Psoas muscle (tissue), 8 donors: ENCODE measurements at regions of chr17 and their contacts with region 1.

Region 1: DNA sequence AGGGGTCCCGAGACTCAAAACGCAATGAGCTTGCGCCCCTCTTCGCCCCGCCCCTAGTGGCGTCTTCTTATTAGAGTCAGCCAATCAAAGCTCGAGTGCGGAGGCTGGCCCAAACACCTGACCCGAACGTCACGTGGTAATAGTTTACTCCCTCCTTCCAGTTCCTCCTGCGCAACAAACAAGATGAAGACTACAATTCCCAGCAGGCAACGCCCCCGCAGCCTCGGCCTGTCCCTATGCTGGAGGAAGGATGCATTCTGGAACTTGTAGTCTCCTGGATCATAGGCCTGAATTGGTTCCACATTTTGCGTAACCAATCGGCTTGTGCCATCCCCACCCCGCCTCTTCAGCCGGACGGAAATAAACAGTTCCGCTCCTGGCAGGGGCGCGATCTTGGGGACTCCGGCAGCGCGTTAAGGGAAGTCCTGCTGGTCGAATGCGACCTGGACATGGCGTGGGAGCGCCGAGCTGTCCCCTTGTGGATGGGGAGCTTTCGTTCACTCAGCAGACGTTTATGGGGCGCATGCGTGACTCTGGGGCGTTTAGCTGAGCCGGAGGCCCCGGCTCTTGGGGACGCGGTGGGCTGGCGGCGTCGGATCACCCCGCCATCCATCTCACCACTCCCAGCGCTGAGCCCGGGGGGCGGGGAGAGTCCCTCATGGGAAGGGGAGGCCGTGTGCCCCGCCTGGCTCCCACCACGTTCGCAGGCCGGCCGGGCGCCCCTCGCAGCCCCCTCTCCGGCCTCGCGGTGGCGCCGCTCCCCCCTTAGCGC is at the start of gene WBP2:
- DNase-seq: peak; percentile 98 to 99
- ATAC-seq: peak; percentile 82 to 87 (median 84)
- H3K4me3 ChIP-seq: peak within 1 kb of the TSS; percentile 86
- H3K27ac ChIP-seq: peak within 1 kb of the TSS; percentile 98
- H3K4me1 ChIP-seq: peaks cover 42% of the 10 kb centered on the region
- H3K27me3 ChIP-seq: no peaks in the 10 kb centered on the region
- CTCF ChIP-seq: peak; percentile 39
- total RNA-seq, gene WBP2: 109 to 278 (median 164) TPM

Region 2: GRCh38 chr17:75808905-75809715 is 46.4 kb before region 1 on chr17:
- intact Hi-C with region 1: no loop called
- DNase-seq: peak; percentile 69 to 70
- ATAC-seq: peak; percentile 85 to 96 (median 90)
- H3K4me3 ChIP-seq: peak overlapping the region; percentile 25
- H3K27ac ChIP-seq: peak overlapping the region; percentile 78
- H3K4me1 ChIP-seq: peaks cover 24% of the 10 kb centered on the region
- H3K27me3 ChIP-seq: no peaks in the 10 kb centered on the region
- CTCF ChIP-seq: no peak

Region 3: DNA sequence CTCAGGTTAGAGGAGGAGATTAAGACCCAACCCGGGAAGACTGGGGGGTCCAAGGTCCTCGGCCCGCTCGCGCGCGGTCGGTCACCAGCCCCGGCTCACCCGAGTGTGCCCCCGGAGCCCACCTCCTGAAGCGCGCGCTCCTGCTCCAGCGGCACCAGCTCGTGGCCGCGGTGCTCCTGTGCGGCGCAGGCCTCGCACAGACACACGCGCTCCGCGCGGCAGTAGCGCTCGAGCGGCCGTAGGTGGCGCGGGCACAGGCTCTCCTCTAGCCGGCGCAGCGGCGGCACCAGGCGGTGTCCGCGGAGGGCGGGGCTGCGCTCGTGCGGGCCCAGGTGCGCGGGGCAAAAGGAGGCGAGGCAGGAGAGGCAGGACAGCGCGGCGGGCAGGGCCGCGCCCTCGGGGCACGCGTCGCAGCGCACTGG is 22.3 kb after region 1 on chr17:
- intact Hi-C with region 1: loop called in 1 of 2 experiments (anchors 2 kb)
- DNase-seq: peak; percentile 76 to 87
- ATAC-seq: peak; percentile 67 to 77 (median 72)
- H3K4me3 ChIP-seq: peak overlapping the region; percentile 77
- H3K27ac ChIP-seq: peak overlapping the region; percentile 90
- H3K4me1 ChIP-seq: peaks cover 34% of the 10 kb centered on the region
- H3K27me3 ChIP-seq: no peaks in the 10 kb centered on the region
- CTCF ChIP-seq: peak; percentile 40

Region 4: GRCh38 chr17:75896415-75897159 is 41.1 kb after region 1 on chr17 and contains the start of gene TRIM65:
- intact Hi-C with region 1: loop called (anchors 2 to 5 kb)
- DNase-seq: peak; percentile 91 to 95
- ATAC-seq: peak; percentile 82 to 87 (median 85)
- H3K4me3 ChIP-seq: peak within 1 kb of the TSS; percentile 79
- H3K27ac ChIP-seq: peak within 1 kb of the TSS; percentile 97
- H3K4me1 ChIP-seq: peaks cover 21% of the 10 kb centered on the region
- H3K27me3 ChIP-seq: no peaks in the 10 kb centered on the region
- CTCF ChIP-seq: peak; percentile 50
- total RNA-seq, gene TRIM65: 9.2 to 10.3 (median 9.7) TPM